ENCODE measurements at regions of chr17 and their contacts with region 1.

Region 1: DNA sequence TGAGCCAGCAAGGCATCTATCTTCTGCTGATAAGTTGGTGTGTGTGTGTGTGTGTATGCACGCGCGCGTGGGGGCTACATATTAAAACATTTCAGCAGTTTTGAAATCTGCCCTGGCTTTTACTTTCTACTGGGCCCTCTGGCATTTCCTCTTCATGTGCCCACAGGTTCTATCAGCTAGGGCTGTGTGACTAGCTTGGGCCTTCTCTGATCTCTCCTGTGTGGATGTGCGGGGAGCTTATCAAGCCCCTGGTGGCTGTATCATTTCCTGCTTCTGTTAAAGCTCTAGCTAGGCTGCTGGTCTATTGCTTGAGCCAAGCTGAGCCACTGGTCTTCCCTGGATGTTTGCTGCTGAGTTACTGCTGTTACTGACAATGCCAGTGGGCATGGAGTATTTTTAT is 132.5 kb downstream of the AATF start:
- DNase-seq: no peak
- H3K4me3 ChIP-seq: no peak overlapping the region
- H3K27ac ChIP-seq: no peak overlapping the region
- H3K4me1 ChIP-seq: peaks cover 6 to 18% (median 14%) of the 10 kb centered on the region in 4 experiments
- H3K27me3 ChIP-seq: no peaks in the 10 kb centered on the region
- CTCF ChIP-seq: peak in 2 of 3 experiments; percentile 17 to 31; a peak in 1 of 4 replicates
- EP300 ChIP-seq: no peak
- POLR2A ChIP-seq: no peak
- RAD21 ChIP-seq: 0 out of 4 replicates have a peak, but pooled peaks of 1 of the 2 experiments have one; percentile 33

Region 2: GRCh38 chr17:37067555-37068111 is 13.7 kb before region 1 on chr17:
- CTCF ChIA-PET with region 1: interaction called, 14 read pairs
- POLR2A ChIA-PET with region 1: interaction called, 5 read pairs
- DNase-seq: no peak
- H3K4me3 ChIP-seq: no peak overlapping the region
- H3K27ac ChIP-seq: no peak overlapping the region
- H3K4me1 ChIP-seq: peaks cover 21 to 44% (median 37%) of the 10 kb centered on the region in 4 experiments
- H3K27me3 ChIP-seq: no peaks in the 10 kb centered on the region; a peak in 1 of 7 replicates
- CTCF ChIP-seq: no peak
- EP300 ChIP-seq: no peak
- POLR2A ChIP-seq: no peak
- RAD21 ChIP-seq: no peak

Region 3: GRCh38 chr17:37098910-37099664 is 17.8 kb after region 1 on chr17:
- CTCF ChIA-PET with region 1: interaction called, 5 read pairs
- POLR2A ChIA-PET with region 1: interaction called, 12 read pairs
- DNase-seq: no peak
- H3K4me3 ChIP-seq: no peak overlapping the region
- H3K27ac ChIP-seq: no peak overlapping the region
- H3K4me1 ChIP-seq: peaks cover 3 to 7% (median 4%) of the 10 kb centered on the region in 4 experiments; a peak in 5 of 7 replicates
- H3K27me3 ChIP-seq: no peaks in the 10 kb centered on the region
- CTCF ChIP-seq: no peak
- EP300 ChIP-seq: no peak
- POLR2A ChIP-seq: no peak
- RAD21 ChIP-seq: no peak

Measured in H1 (cell line).